Right lobe of liver (tissue), 6 donors: ENCODE measurements at regions of chrX and their contacts with region 1.

Region 1: DNA sequence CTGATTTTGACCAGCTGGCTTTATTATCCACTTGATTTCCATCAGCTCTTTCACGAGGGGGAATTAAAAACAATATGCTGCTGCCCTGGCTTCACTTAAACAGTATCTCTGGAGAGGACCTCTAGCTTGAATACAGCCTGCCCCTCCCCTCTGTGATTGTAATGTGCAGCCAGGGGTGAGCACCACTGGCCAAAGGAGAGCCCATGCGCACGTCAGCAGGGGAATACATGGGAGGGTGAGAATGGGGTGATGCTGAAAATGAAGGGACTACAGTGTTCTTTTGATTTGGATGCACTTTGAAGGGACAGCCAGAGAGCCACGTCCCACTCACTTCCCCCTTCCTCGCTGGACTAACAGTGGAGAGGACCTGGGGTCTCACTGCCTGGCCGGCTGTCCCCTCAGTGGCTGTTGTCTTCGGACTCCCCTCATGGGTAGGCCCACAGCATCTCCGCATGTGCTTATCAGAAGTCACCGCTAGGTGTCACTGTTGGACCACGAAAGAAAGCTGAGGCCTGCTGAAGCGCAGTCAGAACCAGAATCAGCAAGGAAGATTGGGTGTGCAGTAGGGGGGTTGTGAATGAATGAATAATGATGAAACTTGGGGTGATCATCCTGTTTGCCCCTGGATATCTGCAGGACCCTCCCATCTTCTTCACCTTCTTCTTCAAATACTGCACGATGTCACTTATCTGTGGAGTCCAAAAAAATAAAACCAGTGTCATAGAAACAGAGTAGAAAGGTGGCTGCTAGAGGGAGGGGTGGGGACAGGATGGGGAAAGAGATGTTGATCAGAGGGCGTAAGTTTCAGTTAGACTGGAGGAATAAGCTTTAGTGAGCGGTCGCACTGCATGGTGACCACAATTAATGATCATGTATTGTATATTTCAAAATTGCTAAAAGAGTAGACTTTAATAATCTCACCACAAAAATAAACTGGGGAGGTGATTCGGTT is 32.8 kb downstream of the CLCN4 start:
- DNase-seq: peak; percentile 65 to 73 (median 66)
- ATAC-seq: peak; percentile 87 to 94 (median 94)
- H3K4me3 ChIP-seq: no peak overlapping the region
- H3K27ac ChIP-seq: peak overlapping the region in 1 of 3 donors; percentile 10
- H3K4me1 ChIP-seq: peaks cover 0 to 3% (median 0%) of the 10 kb centered on the region in 4 donors
- H3K27me3 ChIP-seq: no peaks in the 10 kb centered on the region
- CTCF ChIP-seq: peak; percentile 78 to 87 (median 82)
- POLR2A ChIP-seq: no peak

Region 2: GRCh38 chrX:11137543-11138139 is 948.0 kb after region 1 on chrX:
- intact Hi-C with region 1: loop called (anchors 10 kb)
- DNase-seq: no peak
- ATAC-seq: peak in 3 of 4 donors; percentile 42 to 53 (median 45)
- H3K4me3 ChIP-seq: no peak overlapping the region
- H3K27ac ChIP-seq: no peak overlapping the region
- H3K4me1 ChIP-seq: no peaks in the 10 kb centered on the region
- H3K27me3 ChIP-seq: no peaks in the 10 kb centered on the region
- CTCF ChIP-seq: peak; percentile 54 to 84 (median 80)
- POLR2A ChIP-seq: no peak